Naive thymus-derived CD8-positive, alpha-beta T cell (primary cell): ENCODE measurements at regions of chr10 and their contacts with region 1.

Region 1: DNA sequence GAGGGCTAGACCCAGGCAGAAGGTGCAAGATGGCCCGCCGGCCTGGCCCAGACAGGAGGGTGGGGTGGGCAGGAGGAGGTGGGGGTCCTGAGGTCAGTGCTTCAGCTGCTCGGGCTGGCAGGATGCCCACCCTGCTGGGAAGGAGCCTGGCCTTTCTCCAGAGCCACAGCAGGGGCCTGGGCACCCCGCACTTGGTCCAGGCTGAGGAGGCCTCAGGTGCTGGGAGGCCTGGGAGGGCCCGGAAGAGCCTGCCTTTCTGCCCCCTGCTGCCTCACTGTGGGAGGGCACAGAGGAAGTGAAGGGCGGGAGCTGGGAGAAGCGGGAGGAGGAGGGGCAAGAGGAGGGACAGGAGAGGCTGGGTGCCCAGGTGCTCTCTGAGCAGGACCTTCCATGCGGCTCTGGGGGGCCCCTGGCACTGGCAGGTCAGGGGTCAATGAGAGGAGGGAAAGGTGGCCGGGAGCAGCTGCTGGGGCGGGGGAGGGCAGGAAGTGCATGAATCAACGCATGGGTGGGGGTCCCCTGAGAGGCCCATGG is 49.7 kb downstream of the PWWP2B start:
- DNase-seq: peak; percentile 40 to 85 (median 62)
- ATAC-seq: peak; percentile 40 to 52
- H3K4me3 Mint-ChIP-seq: peak overlapping the region; percentile 63 to 88 (median 74)
- H3K27ac Mint-ChIP-seq: peak overlapping the region; percentile 93 to 99 (median 98)
- H3K4me1 Mint-ChIP-seq: peaks cover 25 to 56% (median 55%) of the 10 kb centered on the region in 4 donors
- H3K27me3 Mint-ChIP-seq: no peaks in the 10 kb centered on the region

Region 2: DNA sequence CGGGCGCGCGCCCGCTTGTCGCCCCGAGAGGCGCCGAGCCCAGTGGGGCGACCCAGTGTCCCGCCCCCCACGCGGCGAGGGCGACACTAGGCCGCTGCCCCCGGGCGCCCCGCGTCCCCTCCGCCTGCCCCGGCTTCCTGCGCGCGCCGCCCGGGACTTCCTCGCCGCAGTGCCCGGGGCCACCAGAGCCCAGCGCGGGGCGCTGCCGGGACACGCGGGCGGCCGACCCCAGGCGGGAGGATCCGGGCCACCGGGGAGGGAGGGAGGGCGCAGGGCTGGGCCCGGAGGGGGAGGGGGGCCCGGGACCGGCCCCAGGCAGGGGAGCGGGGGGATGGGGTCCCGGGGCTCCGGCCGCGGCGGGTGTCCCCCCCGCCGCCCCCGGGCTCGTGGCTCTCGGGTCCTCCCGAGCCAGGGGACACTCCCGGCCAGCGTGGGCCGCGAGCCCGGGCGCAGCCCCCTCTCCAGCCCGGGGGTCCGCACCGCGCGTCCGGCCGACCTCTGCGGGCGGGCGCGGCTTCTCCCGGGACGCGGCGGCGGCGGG is 50.2 kb before region 1 on chr10:
- POLR2A ChIA-PET with region 1: interaction called, 46 read pairs
- DNase-seq: peak; percentile 53 to 80 (median 68)
- ATAC-seq: peak; percentile 79 to 82
- H3K4me3 Mint-ChIP-seq: peak overlapping the region in 1 of 10 donors; percentile 35
- H3K27ac Mint-ChIP-seq: no peak overlapping the region
- H3K4me1 Mint-ChIP-seq: peaks cover 18 to 51% (median 38%) of the 10 kb centered on the region in 4 donors
- H3K27me3 Mint-ChIP-seq: no peaks in the 10 kb centered on the region

Region 3: GRCh38 chr10:132421392-132421877 is 25.3 kb before region 1 on chr10:
- POLR2A ChIA-PET with region 1: interaction called, 13 read pairs
- DNase-seq: no peak
- ATAC-seq: peak; percentile 42 to 60
- H3K4me3 Mint-ChIP-seq: peak overlapping the region in 7 of 10 donors; percentile 26 to 63 (median 48)
- H3K27ac Mint-ChIP-seq: peak overlapping the region in 8 of 10 donors; percentile 16 to 94 (median 74)
- H3K4me1 Mint-ChIP-seq: peaks cover 17 to 51% (median 45%) of the 10 kb centered on the region in 4 donors
- H3K27me3 Mint-ChIP-seq: no peaks in the 10 kb centered on the region

Region 4: GRCh38 chr10:132434405-132435005 is 12.2 kb before region 1 on chr10:
- POLR2A ChIA-PET with region 1: interaction called, 12 read pairs
- DNase-seq: peak in 6 of 10 donors; percentile 38 to 77 (median 47)
- ATAC-seq: peak; percentile 57 to 75
- H3K4me3 Mint-ChIP-seq: peak overlapping the region; percentile 52 to 77 (median 61)
- H3K27ac Mint-ChIP-seq: peak overlapping the region in 7 of 10 donors; percentile 18 to 83 (median 63)
- H3K4me1 Mint-ChIP-seq: peaks cover 9 to 18% (median 12%) of the 10 kb centered on the region in 4 donors
- H3K27me3 Mint-ChIP-seq: no peaks in the 10 kb centered on the region

Region 5: DNA sequence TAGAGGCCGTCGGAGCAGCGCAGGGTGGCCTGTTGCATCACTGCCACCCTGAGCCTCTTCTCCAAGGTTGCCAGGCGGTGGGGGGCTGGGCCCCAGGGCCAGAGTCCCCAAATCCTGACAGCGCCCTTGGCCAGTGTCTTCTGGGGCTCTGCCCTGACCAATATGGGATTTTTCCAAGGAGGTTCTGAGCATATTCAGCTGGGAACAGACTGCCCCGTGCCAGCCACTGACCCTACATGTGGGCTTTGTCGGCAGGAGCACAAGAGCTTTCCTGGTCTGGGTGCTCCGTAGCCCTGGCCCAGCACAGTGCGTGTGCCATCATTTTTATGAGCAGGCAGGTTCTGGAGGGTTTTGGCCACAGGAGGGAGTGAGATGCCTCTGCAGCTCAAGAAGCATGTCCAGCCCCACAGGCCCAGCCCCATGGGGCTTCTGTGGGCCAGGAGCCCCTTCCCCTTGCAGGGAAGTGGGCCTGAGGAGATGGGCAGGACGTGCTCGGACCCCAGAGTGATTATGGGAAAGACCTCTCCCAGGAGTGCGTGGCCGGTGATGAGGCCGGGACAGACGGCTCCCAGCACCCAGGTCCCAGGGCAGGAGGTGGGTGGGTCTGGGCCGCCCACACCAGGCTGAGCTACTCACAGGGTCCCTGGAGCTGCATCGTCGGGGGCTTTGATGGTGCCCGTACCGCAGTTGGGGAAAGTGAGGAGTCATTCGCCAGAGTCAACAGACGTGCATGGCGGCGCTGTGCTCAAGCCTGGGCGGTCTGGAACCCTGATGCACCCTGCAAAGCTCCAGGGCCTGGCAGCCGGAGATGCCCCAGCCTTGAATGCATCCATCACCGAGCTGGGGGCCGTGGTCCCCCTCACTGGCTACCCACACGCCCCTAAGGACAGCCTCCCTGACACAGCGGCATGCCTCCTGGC is 16.9 kb after region 1 on chr10:
- POLR2A ChIA-PET with region 1: no interaction called
- DNase-seq: peak in 1 of 10 donors; percentile 55
- ATAC-seq: no peak
- H3K4me3 Mint-ChIP-seq: no peak overlapping the region
- H3K27ac Mint-ChIP-seq: no peak overlapping the region
- H3K4me1 Mint-ChIP-seq: peaks cover 0 to 4% (median 1%) of the 10 kb centered on the region in 4 donors
- H3K27me3 Mint-ChIP-seq: peaks cover 0 to 2% (median 0%) of the 10 kb centered on the region in 5 donors

Region 6: GRCh38 chr10:132506711-132507408 is 60.1 kb after region 1 on chr10:
- POLR2A ChIA-PET with region 1: no interaction called
- DNase-seq: peak in 1 of 10 donors; percentile 46
- ATAC-seq: peak in 1 of 2 donors; percentile 47
- H3K4me3 Mint-ChIP-seq: no peak overlapping the region
- H3K27ac Mint-ChIP-seq: no peak overlapping the region
- H3K4me1 Mint-ChIP-seq: no peaks in the 10 kb centered on the region
- H3K27me3 Mint-ChIP-seq: peaks cover 0 to 2% (median 0%) of the 10 kb centered on the region in 5 donors